Breast epithelium (tissue), 4 donors: ENCODE measurements at regions of chr12 and their contacts with region 1.

Region 1: DNA sequence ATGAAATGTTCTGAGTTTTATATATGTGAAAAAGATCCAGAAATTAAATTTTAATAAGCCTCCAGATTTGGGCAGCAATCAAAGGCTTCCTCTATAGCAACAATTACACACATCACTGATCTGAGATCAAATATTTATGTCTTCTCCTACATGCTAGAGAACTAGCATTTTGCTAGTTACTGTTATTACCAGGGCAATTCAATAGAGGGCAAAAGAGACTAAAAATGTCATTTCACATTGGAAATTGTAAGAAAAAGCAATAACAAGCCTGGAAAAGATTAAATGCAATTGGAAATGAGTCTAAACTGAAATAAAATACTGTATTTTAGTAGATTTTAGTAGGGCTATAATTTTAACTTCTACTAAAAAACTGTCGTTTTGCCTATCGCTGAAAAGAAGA is 32.6 kb upstream of the ANO6 start:
- DNase-seq: no peak
- H3K4me3 ChIP-seq: no peak overlapping the region
- H3K27ac ChIP-seq: no peak overlapping the region
- H3K4me1 ChIP-seq: no peaks in the 10 kb centered on the region
- H3K27me3 ChIP-seq: no peaks in the 10 kb centered on the region
- CTCF ChIP-seq: peak in 1 of 3 donors; percentile 40
- POLR2A ChIP-seq: no peak

Region 2: DNA sequence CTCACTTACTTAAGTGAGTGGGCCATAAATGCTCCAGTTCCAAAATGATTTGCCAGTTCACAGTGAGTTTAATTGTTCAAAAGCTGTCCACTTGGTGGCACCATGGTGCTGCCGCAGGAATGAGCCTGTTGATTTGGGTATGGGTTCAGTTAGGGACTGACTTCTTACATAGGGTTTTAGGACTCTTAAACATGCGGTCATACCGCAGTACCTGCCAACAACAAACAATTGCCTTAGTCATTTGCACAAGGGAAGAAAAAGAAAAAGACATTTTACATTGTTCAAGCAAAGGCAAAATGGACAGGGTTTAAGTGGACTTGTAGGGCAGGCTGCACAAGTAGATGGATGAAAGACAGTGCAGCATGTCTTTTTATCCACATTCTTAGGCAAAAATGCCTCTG is 52.4 kb before region 1 on chr12:
- intact Hi-C with region 1: no loop called
- DNase-seq: peak in 1 of 2 donors; percentile 46
- H3K4me3 ChIP-seq: no peak overlapping the region
- H3K27ac ChIP-seq: no peak overlapping the region
- H3K4me1 ChIP-seq: no peaks in the 10 kb centered on the region
- H3K27me3 ChIP-seq: no peaks in the 10 kb centered on the region
- CTCF ChIP-seq: peak; percentile 28 to 75 (median 68)
- POLR2A ChIP-seq: no peak

Region 3: GRCh38 chr12:45166056-45166455 is 17.2 kb before region 1 on chr12:
- intact Hi-C with region 1: no loop called
- DNase-seq: no peak
- H3K4me3 ChIP-seq: no peak overlapping the region
- H3K27ac ChIP-seq: no peak overlapping the region
- H3K4me1 ChIP-seq: no peaks in the 10 kb centered on the region
- H3K27me3 ChIP-seq: no peaks in the 10 kb centered on the region
- CTCF ChIP-seq: no peak
- POLR2A ChIP-seq: no peak

Region 4: GRCh38 chr12:45268672-45269411 is 85.6 kb after region 1 on chr12:
- intact Hi-C with region 1: no loop called
- DNase-seq: peak; percentile 56 to 61
- H3K4me3 ChIP-seq: peak overlapping the region in 2 of 3 donors; percentile 6 to 22
- H3K27ac ChIP-seq: peak overlapping the region; percentile 54 to 74
- H3K4me1 ChIP-seq: peaks cover 5 to 15% of the 10 kb centered on the region in 2 donors
- H3K27me3 ChIP-seq: no peaks in the 10 kb centered on the region
- CTCF ChIP-seq: peak in 2 of 3 donors; percentile 19 to 28
- POLR2A ChIP-seq: no peak

Region 5: GRCh38 chr12:45388545-45388944 is 205.3 kb after region 1 on chr12:
- intact Hi-C with region 1: loop called (anchors 10 kb)
- DNase-seq: no peak
- H3K4me3 ChIP-seq: no peak overlapping the region
- H3K27ac ChIP-seq: no peak overlapping the region
- H3K4me1 ChIP-seq: no peaks in the 10 kb centered on the region
- H3K27me3 ChIP-seq: no peaks in the 10 kb centered on the region
- CTCF ChIP-seq: peak in 2 of 3 donors; percentile 55 to 64
- POLR2A ChIP-seq: no peak